SK-N-SH (cell line): ENCODE measurements at regions of chr5 and their contacts with region 1.

Region 1: GRCh38 chr5:151126199-151126645 is 31.4 kb downstream of the ANXA6 start:
- DNase-seq: peak; percentile 75
- H3K4me3 ChIP-seq: peak overlapping the region in 1 of 2 experiments; percentile 32; a peak in 1 of 4 replicates
- H3K27ac ChIP-seq: no peak overlapping the region
- H3K4me1 ChIP-seq: no peaks in the 10 kb centered on the region; a peak in 1 of 4 replicates
- H3K27me3 ChIP-seq: no peaks in the 10 kb centered on the region
- CTCF ChIP-seq: peak; percentile 81
- EP300 ChIP-seq: no peak
- RAD21 ChIP-seq: peak; percentile 79

Region 2: GRCh38 chr5:151002250-151002649 is 124.0 kb before region 1 on chr5:
- CTCF ChIA-PET with region 1: interaction called, 10 read pairs
- POLR2A ChIA-PET with region 1: no interaction called
- DNase-seq: peak; percentile 41
- H3K4me3 ChIP-seq: no peak overlapping the region
- H3K27ac ChIP-seq: no peak overlapping the region
- H3K4me1 ChIP-seq: no peaks in the 10 kb centered on the region; a peak in 1 of 4 replicates
- H3K27me3 ChIP-seq: no peaks in the 10 kb centered on the region
- CTCF ChIP-seq: peak; percentile 60
- EP300 ChIP-seq: no peak
- RAD21 ChIP-seq: peak; percentile 76

Region 3: DNA sequence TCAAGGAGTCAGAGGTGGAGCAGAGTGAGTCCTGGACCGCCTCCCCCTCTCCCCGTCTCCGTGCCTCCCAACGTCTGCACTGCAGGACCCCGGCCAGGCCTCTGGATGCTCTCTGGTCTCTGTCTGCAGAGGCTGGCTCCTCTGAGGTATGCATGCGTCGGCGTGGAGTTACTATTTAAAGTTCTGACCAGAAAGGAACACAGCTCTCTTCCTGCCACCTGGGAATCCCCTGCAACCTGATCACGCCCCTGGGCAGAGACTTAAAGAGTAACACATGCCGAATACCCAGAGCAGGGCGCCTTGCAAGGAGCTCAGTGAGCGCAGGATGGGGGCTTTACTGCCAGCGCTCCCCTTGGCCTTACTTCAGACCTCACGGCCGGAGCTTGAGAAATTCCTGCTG is 15.3 kb after region 1 on chr5:
- CTCF ChIA-PET with region 1: interaction called, 46 read pairs
- POLR2A ChIA-PET with region 1: no interaction called
- DNase-seq: no peak
- H3K4me3 ChIP-seq: no peak overlapping the region
- H3K27ac ChIP-seq: no peak overlapping the region; a peak in 1 of 4 replicates
- H3K4me1 ChIP-seq: no peaks in the 10 kb centered on the region
- H3K27me3 ChIP-seq: no peaks in the 10 kb centered on the region
- CTCF ChIP-seq: no peak
- EP300 ChIP-seq: no peak
- RAD21 ChIP-seq: no peak

Region 4: GRCh38 chr5:151157426-151158286 is 31.4 kb after region 1 on chr5 and contains the start of gene ANXA6:
- CTCF ChIA-PET with region 1: interaction called, 540 read pairs
- POLR2A ChIA-PET with region 1: interaction called, 3 read pairs
- DNase-seq: peak; percentile 91
- H3K4me3 ChIP-seq: peak within 1 kb of the TSS; percentile 82 to 96
- H3K27ac ChIP-seq: peak within 1 kb of the TSS in 1 of 2 experiments; percentile 73; a peak in 1 of 4 replicates
- H3K4me1 ChIP-seq: peaks cover 18 to 31% of the 10 kb centered on the region in 2 experiments; a peak in 2 of 4 replicates
- H3K27me3 ChIP-seq: no peaks in the 10 kb centered on the region
- CTCF ChIP-seq: no peak
- EP300 ChIP-seq: no peak
- RAD21 ChIP-seq: no peak
- polyA plus RNA-seq, gene ANXA6: 87.5 and 101 TPM in 2 replicates

Region 5: GRCh38 chr5:151183451-151184245 is 57.4 kb after region 1 on chr5:
- CTCF ChIA-PET with region 1: interaction called, 13 read pairs
- POLR2A ChIA-PET with region 1: no interaction called
- DNase-seq: no peak
- H3K4me3 ChIP-seq: no peak overlapping the region
- H3K27ac ChIP-seq: no peak overlapping the region
- H3K4me1 ChIP-seq: no peaks in the 10 kb centered on the region; a peak in 1 of 4 replicates
- H3K27me3 ChIP-seq: no peaks in the 10 kb centered on the region
- CTCF ChIP-seq: no peak
- EP300 ChIP-seq: no peak
- RAD21 ChIP-seq: no peak